GM12878 (cell line): ENCODE measurements at regions of chr14 and their contacts with region 1.

Region 1: GRCh38 chr14:53539489-53540126 is 386.5 kb upstream of the DDHD1 start:
- DNase-seq: peak; percentile 41
- ATAC-seq: peak; percentile 96
- H3K4me3 ChIP-seq: no peak overlapping the region
- H3K27ac ChIP-seq: no peak overlapping the region
- H3K4me1 ChIP-seq: peaks cover 1% of the 10 kb centered on the region; the same call in 1 of the 2 replicates
- H3K27me3 ChIP-seq: no peaks in the 10 kb centered on the region
- CTCF ChIP-seq: peak; percentile 79 to 83 (median 82)
- EP300 ChIP-seq: no peak
- POLR2A ChIP-seq: no peak
- RAD21 ChIP-seq: peak; percentile 99

Region 2: DNA sequence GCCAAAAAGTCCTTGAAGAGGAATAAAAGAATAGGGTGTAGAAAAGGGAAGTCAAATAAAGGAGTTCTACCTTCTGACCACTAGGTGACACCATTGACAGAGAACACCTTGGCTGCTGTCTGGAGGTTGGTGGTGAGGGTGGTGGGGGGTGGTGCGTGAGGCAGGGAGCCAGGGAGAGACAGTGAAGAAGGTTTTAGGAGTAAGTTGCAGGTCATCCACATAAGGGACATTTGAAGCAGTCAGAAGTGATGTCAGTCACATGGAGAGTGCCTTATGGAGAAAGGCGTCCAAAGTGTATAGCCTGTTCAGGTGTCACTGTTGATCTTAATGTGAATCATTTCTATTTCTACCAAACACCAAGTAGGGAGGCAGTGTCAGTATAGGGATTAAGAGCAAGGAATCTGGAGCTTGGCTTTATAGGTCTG is 107.2 kb before region 1 on chr14:
- CTCF ChIA-PET with region 1: interaction called, 7 read pairs
- POLR2A ChIA-PET with region 1: no interaction called
- RAD21 ChIA-PET with region 1: no interaction called
- SMC1A ChIA-PET with region 1: interaction called, 3 read pairs
- in situ Hi-C with region 1: no loop called
- intact Hi-C with region 1: loop called (anchors 2 kb)
- DNase-seq: no peak
- ATAC-seq: peak; percentile 87
- H3K4me3 ChIP-seq: no peak overlapping the region
- H3K27ac ChIP-seq: no peak overlapping the region
- H3K4me1 ChIP-seq: no peaks in the 10 kb centered on the region
- H3K27me3 ChIP-seq: no peaks in the 10 kb centered on the region
- CTCF ChIP-seq: peak; percentile 63 to 70 (median 70)
- EP300 ChIP-seq: no peak
- POLR2A ChIP-seq: no peak
- RAD21 ChIP-seq: peak; percentile 87

Region 3: DNA sequence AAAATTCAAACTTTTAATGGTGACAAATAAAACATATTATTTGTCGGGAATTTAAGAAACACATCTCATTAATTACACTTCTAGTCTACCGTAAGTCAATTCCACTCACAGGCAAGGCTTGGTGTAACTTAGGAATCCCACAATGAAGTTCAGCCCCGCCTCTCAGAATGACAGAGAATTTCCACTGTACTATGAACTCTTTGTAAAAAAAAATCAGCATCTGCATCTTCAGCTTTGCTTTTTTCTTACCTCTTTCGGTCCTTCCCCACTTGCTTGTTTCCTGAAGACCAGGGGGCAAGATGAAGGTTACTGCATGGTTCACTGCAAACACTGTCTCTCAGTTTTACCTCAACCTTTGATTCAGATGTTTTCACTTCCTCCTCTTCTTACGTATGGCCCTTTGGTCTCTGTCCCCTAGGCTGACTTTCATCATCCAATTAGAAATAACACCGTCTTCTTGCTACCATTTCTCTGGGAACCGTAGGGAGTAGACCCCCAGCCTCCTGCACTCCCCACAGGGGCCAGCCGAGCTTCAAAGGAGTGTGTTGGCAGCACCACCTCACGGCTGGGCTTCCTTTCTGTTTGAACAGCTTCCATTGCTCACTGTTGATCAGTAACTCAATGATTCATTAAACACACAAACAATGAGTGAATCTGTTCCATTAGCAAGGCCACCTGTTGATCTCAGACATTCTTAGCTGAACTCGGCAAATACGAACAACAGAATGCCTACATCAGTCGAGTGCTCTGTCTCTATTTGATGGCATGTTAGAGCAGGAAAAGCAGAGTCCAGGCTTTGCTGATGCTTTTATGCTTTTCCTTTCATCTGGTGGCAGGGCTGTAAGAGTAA is 74.0 kb after region 1 on chr14:
- CTCF ChIA-PET with region 1: interaction called, 11 read pairs
- POLR2A ChIA-PET with region 1: no interaction called
- RAD21 ChIA-PET with region 1: no interaction called
- SMC1A ChIA-PET with region 1: interaction called, 5 read pairs
- in situ Hi-C with region 1: no loop called
- intact Hi-C with region 1: loop called (anchors 2 kb)
- DNase-seq: peak; percentile 98
- ATAC-seq: peak; percentile 92
- H3K4me3 ChIP-seq: peak overlapping the region; percentile 42
- H3K27ac ChIP-seq: peak overlapping the region; percentile 74
- H3K4me1 ChIP-seq: peaks cover 15% of the 10 kb centered on the region; the same call in 1 of the 2 replicates
- H3K27me3 ChIP-seq: no peaks in the 10 kb centered on the region
- CTCF ChIP-seq: no peak
- EP300 ChIP-seq: peak; percentile 98 to 99
- POLR2A ChIP-seq: peak; percentile 54; the same call in 1 of the 2 replicates
- RAD21 ChIP-seq: 0 out of 2 replicates have a peak, but pooled peaks have one; percentile 18

Region 4: GRCh38 chr14:53778263-53778662 is 238.7 kb after region 1 on chr14:
- CTCF ChIA-PET with region 1: interaction called, 6 read pairs
- POLR2A ChIA-PET with region 1: no interaction called
- RAD21 ChIA-PET with region 1: interaction called, 7 read pairs
- SMC1A ChIA-PET with region 1: interaction called, 5 read pairs
- in situ Hi-C with region 1: no loop called
- intact Hi-C with region 1: loop called (anchors 5 kb)
- DNase-seq: no peak
- ATAC-seq: peak; percentile 24; the same call in 1 of the 3 replicates
- H3K4me3 ChIP-seq: no peak overlapping the region
- H3K27ac ChIP-seq: no peak overlapping the region
- H3K4me1 ChIP-seq: no peaks in the 10 kb centered on the region
- H3K27me3 ChIP-seq: no peaks in the 10 kb centered on the region; a peak in 1 of 4 replicates
- CTCF ChIP-seq: no peak
- EP300 ChIP-seq: no peak
- POLR2A ChIP-seq: no peak
- RAD21 ChIP-seq: no peak

Region 5: GRCh38 chr14:53993920-53994607 is 454.5 kb after region 1 on chr14:
- CTCF ChIA-PET with region 1: no interaction called
- POLR2A ChIA-PET with region 1: no interaction called
- RAD21 ChIA-PET with region 1: no interaction called
- SMC1A ChIA-PET with region 1: no interaction called
- in situ Hi-C with region 1: no loop called
- intact Hi-C with region 1: no loop called
- DNase-seq: no peak
- ATAC-seq: no peak
- H3K4me3 ChIP-seq: no peak overlapping the region
- H3K27ac ChIP-seq: no peak overlapping the region
- H3K4me1 ChIP-seq: no peaks in the 10 kb centered on the region
- H3K27me3 ChIP-seq: no peaks in the 10 kb centered on the region
- CTCF ChIP-seq: no peak
- EP300 ChIP-seq: no peak
- POLR2A ChIP-seq: no peak
- RAD21 ChIP-seq: no peak

Region 6: DNA sequence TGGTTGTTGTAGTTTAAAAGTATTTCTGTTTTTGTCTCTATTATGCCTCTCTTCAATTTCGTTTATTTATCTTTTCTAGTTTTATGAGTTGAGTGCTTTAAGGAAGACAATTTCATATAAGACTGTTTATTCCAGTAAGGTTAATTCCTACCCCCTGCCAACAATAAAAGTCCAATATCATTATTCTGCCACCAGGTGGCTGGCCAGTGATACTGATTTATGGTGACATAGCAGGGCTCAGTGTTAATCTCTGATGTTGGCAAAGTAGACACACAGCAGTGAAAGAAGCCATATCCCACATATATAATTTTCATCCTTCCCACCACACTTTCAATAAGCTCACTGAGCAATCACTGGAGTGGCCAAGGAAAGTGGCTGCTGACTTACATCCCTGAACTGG is 486.1 kb after region 1 on chr14:
- CTCF ChIA-PET with region 1: no interaction called
- POLR2A ChIA-PET with region 1: no interaction called
- RAD21 ChIA-PET with region 1: no interaction called
- SMC1A ChIA-PET with region 1: interaction called, 3 read pairs
- in situ Hi-C with region 1: no loop called
- intact Hi-C with region 1: loop called (anchors 10 kb)
- DNase-seq: no peak
- ATAC-seq: peak; percentile 53
- H3K4me3 ChIP-seq: no peak overlapping the region
- H3K27ac ChIP-seq: no peak overlapping the region
- H3K4me1 ChIP-seq: no peaks in the 10 kb centered on the region
- H3K27me3 ChIP-seq: no peaks in the 10 kb centered on the region
- CTCF ChIP-seq: no peak; a peak in 3 of 6 replicates
- EP300 ChIP-seq: no peak
- POLR2A ChIP-seq: no peak
- RAD21 ChIP-seq: peak; percentile 46

Region 7: DNA sequence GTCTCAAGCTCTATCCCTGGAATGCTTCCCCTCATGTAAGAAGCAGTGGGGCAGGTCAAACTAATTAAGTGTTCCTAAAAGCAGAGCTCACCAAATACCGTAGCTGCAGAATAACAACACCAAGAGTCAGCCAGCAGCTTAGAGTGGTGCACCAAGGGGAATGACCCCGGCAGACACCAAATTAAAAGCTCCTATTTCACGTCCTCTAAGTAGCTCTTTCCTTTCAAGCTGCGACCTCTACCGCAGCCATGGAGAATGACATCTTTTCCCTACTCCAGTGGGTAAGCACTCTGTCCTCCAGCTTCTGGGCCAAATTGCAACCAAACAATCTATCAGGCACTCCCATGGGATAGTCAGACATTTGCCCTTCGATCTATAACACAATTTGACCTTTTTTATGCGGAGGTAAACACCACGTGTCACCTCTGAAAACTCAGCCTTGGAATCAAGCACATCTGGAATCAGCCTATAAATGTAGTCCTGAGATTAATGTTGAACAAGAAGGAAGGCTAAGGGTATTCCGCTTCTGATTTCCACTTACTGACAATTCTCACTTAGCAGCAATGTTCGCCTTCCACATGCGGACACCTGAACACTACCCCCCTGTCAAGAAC is 789.6 kb after region 1 on chr14:
- CTCF ChIA-PET with region 1: interaction called, 11 read pairs
- POLR2A ChIA-PET with region 1: no interaction called
- RAD21 ChIA-PET with region 1: interaction called, 6 read pairs
- SMC1A ChIA-PET with region 1: interaction called, 11 read pairs
- in situ Hi-C with region 1: loop called (anchors 25 kb)
- intact Hi-C with region 1: loop called (anchors 1 kb)
- DNase-seq: no peak
- ATAC-seq: peak; percentile 86
- H3K4me3 ChIP-seq: no peak overlapping the region
- H3K27ac ChIP-seq: no peak overlapping the region
- H3K4me1 ChIP-seq: no peaks in the 10 kb centered on the region
- H3K27me3 ChIP-seq: no peaks in the 10 kb centered on the region; a peak in 1 of 4 replicates
- CTCF ChIP-seq: peak; percentile 75 to 86 (median 79)
- EP300 ChIP-seq: no peak
- POLR2A ChIP-seq: no peak
- RAD21 ChIP-seq: peak; percentile 87